HEK293 (cell line): ENCODE measurements at regions of chr17 and their contacts with region 1.

Region 1: GRCh38 chr17:58402047-58402446 is 15.3 kb downstream of the RNF43 start:
- H3K4me3 ChIP-seq: no peak overlapping the region
- H3K27ac ChIP-seq: no peak overlapping the region
- H3K4me1 ChIP-seq: peaks cover 41% of the 10 kb centered on the region
- CTCF ChIP-seq: no peak

Region 2: GRCh38 chr17:60102632-60103096 is 1700.6 kb after region 1 on chr17:
- CTCF ChIA-PET with region 1: no interaction called
- POLR2A ChIA-PET with region 1: interaction called, 10 read pairs
- H3K4me3 ChIP-seq: peak overlapping the region; percentile 9
- H3K27ac ChIP-seq: peak overlapping the region; percentile 53; the same call in 1 of the 2 replicates
- H3K4me1 ChIP-seq: no peaks in the 10 kb centered on the region
- CTCF ChIP-seq: no peak